ENCODE measurements at regions of chr12 and their contacts with region 1.

Region 1: DNA sequence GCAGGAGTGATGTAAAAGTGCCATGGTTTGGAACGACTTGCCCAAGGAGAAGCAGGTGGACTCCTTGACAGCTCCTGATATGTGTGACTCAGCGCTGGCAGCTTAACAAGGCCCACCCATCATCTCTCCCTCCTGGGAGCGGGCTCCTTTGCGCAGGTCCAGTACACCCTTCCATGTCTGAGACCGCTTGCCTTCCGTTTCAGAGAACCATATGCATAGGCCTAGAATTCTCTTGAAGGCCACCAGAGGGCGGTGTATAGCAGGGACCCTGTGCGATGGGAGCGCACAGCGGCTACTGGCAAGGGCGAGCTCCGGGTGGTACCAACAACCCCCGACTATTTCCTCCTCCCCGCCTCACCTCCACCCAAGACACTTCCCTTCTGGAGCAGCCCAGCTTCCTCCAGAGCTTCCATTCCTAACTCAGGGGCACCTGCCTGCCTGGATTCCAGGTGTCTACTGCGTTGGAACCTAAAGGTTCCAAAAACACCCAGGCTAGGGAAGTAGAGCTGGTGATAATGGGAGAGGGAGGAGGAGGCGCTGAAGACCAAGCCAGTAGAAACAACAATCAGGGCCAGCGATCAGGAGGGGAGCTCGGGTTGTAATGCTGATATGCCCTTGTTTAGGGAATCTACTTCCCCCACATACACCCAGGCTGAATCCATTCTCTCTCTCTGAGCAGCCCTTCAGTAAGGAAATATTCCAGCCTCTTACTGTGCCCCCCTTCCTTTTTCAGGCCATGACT is 6.2 kb downstream of the DHH start:
- DNase-seq: peak; percentile 92
- H3K4me3 Mint-ChIP-seq: peak overlapping the region; percentile 39
- H3K27ac Mint-ChIP-seq: no peak overlapping the region
- H3K4me1 Mint-ChIP-seq: peaks cover 40% of the 10 kb centered on the region
- H3K27me3 Mint-ChIP-seq: peaks cover 42% of the 10 kb centered on the region

Region 2: GRCh38 chr12:48910196-48910595 is 178.2 kb before region 1 on chr12:
- intact Hi-C with region 1: no loop called
- DNase-seq: no peak
- H3K4me3 Mint-ChIP-seq: no peak overlapping the region
- H3K27ac Mint-ChIP-seq: no peak overlapping the region
- H3K4me1 Mint-ChIP-seq: no peaks in the 10 kb centered on the region
- H3K27me3 Mint-ChIP-seq: peaks cover 1% of the 10 kb centered on the region

Region 3: DNA sequence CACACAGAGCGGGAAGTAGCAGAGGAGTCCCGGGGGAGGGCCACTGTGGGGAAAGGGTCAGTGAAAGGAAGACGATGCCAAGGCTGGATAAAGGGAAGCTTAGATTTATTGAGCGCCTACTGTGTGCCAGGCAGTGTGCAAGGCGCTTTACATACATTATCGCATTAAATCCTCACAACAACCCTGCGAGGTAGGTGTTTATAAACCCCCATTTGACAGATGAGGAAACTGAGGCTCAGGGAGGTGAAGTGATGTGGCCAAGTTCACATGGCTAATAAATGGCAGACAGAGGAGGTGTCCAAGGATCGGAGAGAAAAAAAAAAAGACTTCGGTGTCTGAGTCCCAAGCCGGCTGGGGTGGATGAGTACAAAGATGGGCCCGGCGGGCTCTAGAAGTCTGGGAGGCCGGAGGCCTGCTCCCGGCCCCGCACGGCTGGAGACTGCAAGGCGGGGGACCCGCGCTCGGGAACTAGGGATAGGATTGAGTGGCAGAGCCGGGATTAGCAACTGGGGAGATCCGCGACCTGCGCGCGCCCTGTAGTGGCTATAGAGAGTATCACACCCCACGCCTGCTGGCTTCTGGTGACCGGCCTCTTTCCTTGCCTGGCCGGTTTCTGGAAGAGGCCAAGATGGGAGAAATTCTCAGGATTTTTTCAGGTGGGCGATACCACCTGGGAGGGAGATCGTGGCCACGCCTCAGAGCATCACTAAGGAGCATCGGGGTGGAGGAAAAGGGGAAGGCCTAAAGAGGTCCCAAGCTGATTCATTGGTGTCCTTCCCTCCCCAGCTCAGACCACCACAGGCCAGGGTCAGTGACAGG is 93.1 kb before region 1 on chr12:
- intact Hi-C with region 1: loop called (anchors 2 kb)
- DNase-seq: peak; percentile 87
- H3K4me3 Mint-ChIP-seq: peak overlapping the region; percentile 25
- H3K27ac Mint-ChIP-seq: no peak overlapping the region
- H3K4me1 Mint-ChIP-seq: peaks cover 30% of the 10 kb centered on the region
- H3K27me3 Mint-ChIP-seq: peaks cover 54% of the 10 kb centered on the region

Region 4: DNA sequence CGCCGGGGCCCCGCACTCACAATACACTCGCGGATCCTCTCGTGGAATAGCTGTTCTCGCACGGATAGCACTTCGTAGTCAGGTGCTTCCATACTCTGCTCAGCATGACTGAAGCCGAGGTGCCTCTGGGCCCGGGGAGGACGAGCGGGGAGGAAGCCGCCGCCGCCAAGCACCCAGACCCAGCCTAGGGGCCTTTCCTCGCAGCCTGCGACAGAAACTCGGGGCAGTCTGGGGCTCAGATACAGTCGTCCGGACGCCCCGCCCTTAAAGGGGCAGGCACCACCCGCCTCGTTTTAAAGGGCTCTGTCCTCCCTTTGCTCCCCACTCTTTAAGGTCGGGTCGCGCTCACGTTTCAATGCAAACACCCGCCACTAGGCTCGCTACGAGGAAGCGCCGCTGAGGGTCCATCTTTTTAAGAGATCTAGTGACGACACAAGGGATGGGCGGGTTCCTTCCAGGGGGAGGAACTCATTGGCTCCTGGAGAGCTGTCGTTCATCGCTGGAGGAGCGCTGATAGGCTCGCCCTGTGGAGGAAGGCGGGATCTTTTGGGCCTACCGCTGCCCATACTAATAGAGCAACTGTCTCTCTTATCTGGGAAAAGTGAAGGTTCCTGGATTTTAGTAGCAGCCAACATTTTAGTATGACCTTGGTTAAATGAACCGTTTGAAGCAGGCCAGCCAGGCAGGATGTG is 22.2 kb after region 1 on chr12 and contains the start of gene LMBR1L:
- intact Hi-C with region 1: loop called (anchors 2 kb)
- DNase-seq: peak; percentile 99
- H3K4me3 Mint-ChIP-seq: peak within 1 kb of the TSS; percentile 97
- H3K27ac Mint-ChIP-seq: peak within 1 kb of the TSS; percentile 94
- H3K4me1 Mint-ChIP-seq: peaks cover 24% of the 10 kb centered on the region
- H3K27me3 Mint-ChIP-seq: no peaks in the 10 kb centered on the region
- total RNA-seq, gene LMBR1L: 39.9 and 43.7 TPM in 2 replicates

Region 5: DNA sequence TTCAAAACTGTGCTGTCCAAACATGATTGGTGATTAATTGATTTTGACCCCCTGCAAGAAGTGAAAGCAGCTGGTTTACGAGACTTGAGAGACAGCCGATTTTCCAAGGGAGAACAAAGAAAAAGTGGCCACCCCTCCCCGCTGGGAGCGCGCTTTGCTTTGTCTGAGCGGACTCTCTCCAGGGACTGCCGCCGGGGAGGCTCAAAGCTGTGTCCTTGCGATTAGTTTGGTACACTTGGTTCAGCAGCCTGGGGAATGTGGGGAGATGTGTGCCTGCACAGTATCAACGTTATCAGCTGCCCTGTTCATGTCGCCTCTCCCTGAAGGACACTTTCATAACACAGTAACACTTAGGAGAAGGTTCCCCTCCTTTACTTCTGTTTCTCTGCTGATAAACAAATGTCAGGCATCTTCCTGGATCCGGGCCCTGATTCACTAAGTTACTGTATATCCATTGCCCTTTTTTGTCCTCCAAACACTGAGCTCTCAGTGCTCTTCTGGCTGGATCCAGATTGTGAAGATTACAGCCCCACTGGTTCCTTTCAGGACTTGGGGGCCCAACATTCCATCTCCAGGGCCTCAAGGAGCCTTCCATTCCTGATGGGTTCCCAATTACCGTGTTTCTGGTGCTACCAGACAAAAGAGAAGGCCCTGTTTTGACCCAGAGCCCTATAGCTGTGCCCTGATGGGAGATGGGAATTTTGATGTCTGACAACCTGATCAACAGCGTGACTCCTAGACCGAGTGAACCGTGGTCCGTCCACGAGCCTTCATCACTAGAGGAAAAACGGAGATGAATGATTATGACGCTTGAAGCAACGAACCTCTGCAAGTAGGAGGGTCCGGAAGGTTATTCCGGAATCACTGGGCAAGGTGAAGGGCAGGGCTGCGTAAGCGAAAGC is 144.8 kb after region 1 on chr12:
- intact Hi-C with region 1: loop called (anchors 1 kb)
- DNase-seq: no peak
- H3K4me3 Mint-ChIP-seq: peak overlapping the region; percentile 88
- H3K27ac Mint-ChIP-seq: peak overlapping the region; percentile 77
- H3K4me1 Mint-ChIP-seq: peaks cover 14% of the 10 kb centered on the region
- H3K27me3 Mint-ChIP-seq: peaks cover 1% of the 10 kb centered on the region

Region 6: DNA sequence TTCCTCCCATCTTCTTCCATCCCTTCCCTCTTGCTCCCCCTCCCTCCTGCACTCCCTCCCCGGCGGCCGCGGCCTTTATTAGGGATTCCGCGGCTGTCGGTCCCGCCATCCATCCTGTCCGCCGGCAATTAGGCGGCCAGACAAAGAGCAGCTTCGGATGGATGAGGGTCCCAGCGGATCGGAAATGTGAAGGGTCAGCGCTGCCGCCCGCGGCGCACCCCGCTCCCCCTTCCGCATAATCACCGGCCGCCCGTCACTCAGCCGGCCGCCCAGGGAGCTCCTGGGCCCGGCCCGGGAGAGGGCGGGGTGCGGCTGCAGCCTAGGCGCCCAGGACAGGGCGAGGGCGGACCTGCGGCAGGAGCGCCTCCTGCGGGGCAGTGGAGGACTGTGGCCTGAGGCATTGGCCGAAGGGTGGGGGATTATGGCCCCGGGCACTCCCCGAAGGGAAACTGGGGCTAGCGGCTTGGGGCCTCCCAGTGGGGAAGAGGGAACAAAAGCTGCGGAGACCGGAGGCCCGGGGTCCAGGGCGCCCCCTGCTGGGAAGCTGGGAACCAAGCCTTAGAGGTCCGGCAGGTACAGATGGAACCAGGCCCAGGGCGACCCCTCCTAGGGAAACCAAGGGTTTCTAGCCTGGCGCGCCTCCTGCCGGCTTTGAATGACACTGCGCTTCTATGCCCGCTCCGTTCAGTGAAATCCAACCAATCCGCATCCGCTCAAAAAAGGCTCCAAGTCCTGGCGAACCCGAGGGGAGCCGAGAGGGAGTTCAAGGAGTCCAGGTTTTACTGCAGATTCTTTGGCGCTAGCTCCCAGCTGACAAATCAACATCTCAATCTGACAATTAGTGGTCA is 253.9 kb after region 1 on chr12:
- intact Hi-C with region 1: loop called (anchors 5 kb)
- DNase-seq: peak; percentile 92
- H3K4me3 Mint-ChIP-seq: peak overlapping the region; percentile 68
- H3K27ac Mint-ChIP-seq: no peak overlapping the region
- H3K4me1 Mint-ChIP-seq: peaks cover 37% of the 10 kb centered on the region
- H3K27me3 Mint-ChIP-seq: peaks cover 84% of the 10 kb centered on the region